OCI-LY7 (cell line): ENCODE measurements at regions of chr10 and their contacts with region 1.

Region 1: DNA sequence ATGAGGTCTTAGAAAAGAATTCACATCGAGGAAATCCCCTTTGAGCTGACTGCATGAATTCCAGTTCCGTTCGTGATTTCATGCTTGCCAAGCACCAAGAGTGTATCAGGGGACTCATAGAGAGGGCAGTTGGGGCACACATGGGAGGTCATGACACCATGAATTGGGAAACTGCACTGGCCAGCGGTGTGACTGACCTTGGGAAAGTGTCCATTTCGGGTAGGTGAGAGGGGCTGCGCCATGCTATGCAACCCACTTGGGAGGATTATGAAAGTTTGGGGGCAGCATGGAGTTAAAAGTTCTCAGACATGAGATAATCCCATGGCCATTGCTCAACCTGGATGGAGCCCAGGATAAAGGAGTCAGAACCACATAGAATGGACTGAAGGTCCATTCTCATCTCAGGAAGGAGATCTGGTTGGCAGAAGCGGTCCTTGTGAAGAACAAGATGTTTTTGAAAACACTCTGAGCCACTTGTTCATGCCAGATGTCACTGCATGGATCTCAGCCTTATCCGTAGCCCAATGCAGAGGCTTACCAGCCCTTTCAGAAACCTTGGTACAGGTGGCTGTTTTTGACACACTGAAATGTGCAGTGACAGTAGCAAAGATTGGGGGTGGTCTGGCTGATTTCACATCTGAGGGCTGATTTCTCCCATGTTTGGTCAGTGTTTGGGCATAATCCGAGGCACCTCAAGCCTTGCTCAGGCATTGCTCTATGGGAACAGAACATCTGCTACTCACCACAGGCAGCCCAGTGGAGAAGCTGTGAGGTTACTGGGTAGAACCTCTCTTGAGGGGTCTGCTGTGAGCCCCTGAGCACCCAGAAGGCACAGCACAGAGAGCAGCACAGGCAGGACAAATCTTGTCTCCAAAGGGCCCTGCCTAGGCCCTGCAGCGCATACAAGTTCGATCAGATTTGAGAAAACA is 252.3 kb downstream of the CXCL12 start:
- DNase-seq: no peak
- H3K4me3 ChIP-seq: no peak overlapping the region
- H3K27ac ChIP-seq: no peak overlapping the region
- H3K4me1 ChIP-seq: no peaks in the 10 kb centered on the region
- CTCF ChIP-seq: no peak

Region 2: GRCh38 chr10:44195112-44196007 is 62.7 kb after region 1 on chr10:
- CTCF ChIA-PET with region 1: no interaction called
- POLR2A ChIA-PET with region 1: no interaction called
- intact Hi-C with region 1: loop called (anchors 10 kb)
- DNase-seq: no peak
- H3K4me3 ChIP-seq: no peak overlapping the region
- H3K27ac ChIP-seq: no peak overlapping the region
- H3K4me1 ChIP-seq: no peaks in the 10 kb centered on the region
- CTCF ChIP-seq: no peak